ENCODE measurements at regions of chr7 and their contacts with region 1.

Region 1: DNA sequence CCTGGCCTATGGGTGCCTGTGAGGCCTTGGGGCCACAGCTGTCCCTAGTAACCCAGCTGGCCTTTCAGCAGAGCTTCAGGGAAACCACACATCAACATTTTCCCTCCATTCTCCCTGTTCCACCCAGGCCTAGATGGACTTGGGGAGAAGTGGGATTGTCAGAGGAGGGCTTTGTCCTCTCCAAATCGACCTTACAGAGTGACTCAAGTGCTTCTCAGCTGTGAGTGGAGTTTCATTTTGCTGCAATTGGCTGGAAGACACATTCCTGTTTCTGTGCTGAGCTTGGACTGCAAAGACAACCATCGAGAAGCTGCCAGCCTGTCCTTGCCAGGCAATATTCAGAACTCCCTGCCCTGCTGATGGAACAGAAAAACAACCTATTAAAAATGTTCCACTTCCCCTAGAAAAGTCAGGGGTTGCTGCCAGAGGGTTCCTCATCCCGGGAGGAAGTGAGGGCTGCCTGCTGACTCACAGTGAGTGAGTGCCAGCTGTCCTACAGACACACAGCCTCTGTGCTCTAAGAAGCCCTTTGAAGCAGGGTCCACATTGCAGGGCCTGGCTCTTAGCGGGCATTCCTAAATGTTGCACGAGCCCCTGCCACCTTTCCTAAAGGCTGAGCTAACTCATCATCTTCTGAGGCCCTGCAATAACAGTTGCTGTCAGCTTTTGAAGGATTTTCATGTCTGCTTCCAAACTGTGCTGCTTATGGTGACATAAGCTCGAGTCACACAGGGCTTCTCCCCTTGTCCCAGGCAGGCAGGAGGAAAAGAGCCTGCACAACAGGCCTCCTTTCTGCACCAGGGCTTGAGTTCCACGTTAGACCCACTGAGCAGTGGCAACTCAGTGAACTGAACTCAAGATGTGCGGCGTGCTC is 20.5 kb downstream of the STRA8 start:
- DNase-seq: peak in 4 of 5 donors; percentile 26 to 48 (median 36)
- H3K4me3 ChIP-seq: no peak overlapping the region
- H3K27ac ChIP-seq: peak overlapping the region; percentile 44 to 50
- H3K4me1 ChIP-seq: peaks cover 6% of the 10 kb centered on the region
- H3K27me3 ChIP-seq: no peaks in the 10 kb centered on the region
- CTCF ChIP-seq: no peak
- EP300 ChIP-seq: no peak
- POLR2A ChIP-seq: no peak

Region 2: GRCh38 chr7:134458806-134459698 is 795.1 kb before region 1 on chr7 and contains the start of gene AKR1B1:
- intact Hi-C with region 1: no loop called
- DNase-seq: peak; percentile 87 to 95 (median 91)
- H3K4me3 ChIP-seq: peak within 1 kb of the TSS; percentile 98
- H3K27ac ChIP-seq: peak within 1 kb of the TSS; percentile 65 to 85
- H3K4me1 ChIP-seq: peaks cover 5% of the 10 kb centered on the region
- H3K27me3 ChIP-seq: no peaks in the 10 kb centered on the region
- CTCF ChIP-seq: peak; percentile 52 to 65 (median 61)
- EP300 ChIP-seq: no peak
- POLR2A ChIP-seq: peak; percentile 62
- total RNA-seq, gene AKR1B1: 39.3 to 96.8 (median 80.8) TPM

Region 3: GRCh38 chr7:135405969-135406368 is 151.8 kb after region 1 on chr7:
- intact Hi-C with region 1: no loop called
- DNase-seq: no peak
- H3K4me3 ChIP-seq: no peak overlapping the region
- H3K27ac ChIP-seq: no peak overlapping the region
- H3K4me1 ChIP-seq: no peaks in the 10 kb centered on the region
- H3K27me3 ChIP-seq: no peaks in the 10 kb centered on the region
- CTCF ChIP-seq: no peak
- EP300 ChIP-seq: no peak
- POLR2A ChIP-seq: no peak

Region 4: DNA sequence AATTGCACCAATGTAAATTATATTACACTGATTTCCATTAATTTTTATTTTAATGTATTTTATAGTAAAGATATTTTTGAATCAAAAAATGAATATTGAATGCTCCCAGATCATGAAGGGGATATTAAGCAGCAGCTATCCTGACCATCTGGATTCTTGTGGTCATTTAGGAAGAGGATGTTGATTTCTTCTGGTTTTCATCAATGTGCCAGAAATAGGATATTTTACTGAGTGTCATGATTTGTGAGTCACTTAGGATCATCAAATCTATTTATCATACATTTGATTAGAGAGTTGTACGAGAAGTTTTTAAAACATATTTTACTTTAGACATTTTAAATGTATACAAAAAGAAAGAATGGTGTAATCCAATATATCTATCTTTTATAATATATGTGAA is 1248.0 kb after region 1 on chr7:
- intact Hi-C with region 1: loop called in 1 of 4 experiments (anchors 5 kb)
- DNase-seq: no peak
- H3K4me3 ChIP-seq: no peak overlapping the region
- H3K27ac ChIP-seq: no peak overlapping the region
- H3K4me1 ChIP-seq: no peaks in the 10 kb centered on the region
- H3K27me3 ChIP-seq: no peaks in the 10 kb centered on the region
- CTCF ChIP-seq: no peak
- EP300 ChIP-seq: no peak
- POLR2A ChIP-seq: no peak

Measured in ovary (tissue), 10 donors.